ENCODE measurements at regions of chr9 and their contacts with region 1.

Region 1: DNA sequence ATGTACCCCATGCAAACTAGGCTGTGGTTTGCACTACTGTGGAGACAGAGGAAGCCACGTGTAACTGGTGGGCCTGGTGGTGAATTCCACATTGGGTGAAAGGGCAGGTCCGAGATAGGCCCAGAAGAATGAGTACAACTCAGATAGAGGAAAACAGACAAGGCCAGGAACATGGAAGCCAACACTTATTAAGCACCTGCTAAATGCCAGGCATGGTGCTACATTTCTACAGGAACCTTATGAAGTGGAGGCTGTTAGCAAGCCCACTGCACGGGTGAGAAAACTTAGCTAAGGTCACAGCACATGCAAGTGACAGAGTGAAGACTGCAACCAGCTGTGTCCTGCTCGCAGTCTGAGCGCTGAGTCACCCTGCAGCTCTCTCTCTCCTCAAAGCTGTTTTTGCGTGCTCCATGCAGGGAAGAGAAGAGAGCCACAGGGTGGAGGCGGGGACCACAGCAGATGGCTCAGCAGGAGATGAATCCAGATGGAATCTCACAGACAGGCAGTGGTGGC is 65.5 kb upstream of the SPTLC1 start:
- DNase-seq: peak; percentile 91
- ATAC-seq: peak; percentile 85
- H3K4me3 ChIP-seq: no peak overlapping the region
- H3K27ac ChIP-seq: peak overlapping the region; percentile 81
- H3K4me1 ChIP-seq: peaks cover 15% of the 10 kb centered on the region
- H3K27me3 ChIP-seq: no peaks in the 10 kb centered on the region
- CTCF ChIP-seq: 0 out of 2 replicates have a peak, but pooled peaks have one; percentile 9
- POLR2A ChIP-seq: no peak
- RAD21 ChIP-seq: peak; percentile 29; the same call in 1 of the 2 replicates

Region 2: DNA sequence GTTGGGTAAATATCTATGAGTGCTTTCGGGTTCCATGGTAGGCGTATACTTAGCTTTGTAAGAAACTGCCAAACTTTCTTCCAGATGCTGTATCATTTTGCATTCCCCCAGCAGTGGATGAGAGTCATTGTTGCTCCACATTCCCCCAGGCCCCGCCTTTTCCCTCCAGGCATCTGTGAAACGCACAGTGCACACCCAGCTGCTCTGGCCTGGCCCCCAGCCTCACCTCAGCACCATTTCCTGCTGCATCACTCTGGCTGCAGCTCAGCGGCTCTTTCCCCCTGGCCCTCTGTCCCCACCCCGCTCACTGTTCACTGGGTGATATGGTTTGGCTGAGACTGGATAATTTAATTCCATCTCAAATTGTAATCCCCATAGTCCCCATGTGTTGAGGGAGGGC is 11.1 kb after region 1 on chr9:
- CTCF ChIA-PET with region 1: no interaction called
- POLR2A ChIA-PET with region 1: no interaction called
- dilution Hi-C with region 1: no loop called
- in situ Hi-C with region 1: no loop called
- intact Hi-C with region 1: loop called (anchors 1 kb)
- DNase-seq: peak; percentile 59
- ATAC-seq: peak; percentile 65
- H3K4me3 ChIP-seq: no peak overlapping the region
- H3K27ac ChIP-seq: no peak overlapping the region
- H3K4me1 ChIP-seq: peaks cover 18% of the 10 kb centered on the region
- H3K27me3 ChIP-seq: no peaks in the 10 kb centered on the region
- CTCF ChIP-seq: no peak
- POLR2A ChIP-seq: no peak
- RAD21 ChIP-seq: no peak